ENCODE measurements at regions of chr4 and their contacts with region 1.

Region 1: GRCh38 chr4:77600521-77601451 is 4.8 kb upstream of the CXCL13 start:
- DNase-seq: no peak
- H3K4me3 Mint-ChIP-seq: no peak overlapping the region
- H3K27ac Mint-ChIP-seq: no peak overlapping the region
- H3K4me1 Mint-ChIP-seq: peaks cover 40% of the 10 kb centered on the region
- H3K27me3 Mint-ChIP-seq: peaks cover 10% of the 10 kb centered on the region

Region 2: DNA sequence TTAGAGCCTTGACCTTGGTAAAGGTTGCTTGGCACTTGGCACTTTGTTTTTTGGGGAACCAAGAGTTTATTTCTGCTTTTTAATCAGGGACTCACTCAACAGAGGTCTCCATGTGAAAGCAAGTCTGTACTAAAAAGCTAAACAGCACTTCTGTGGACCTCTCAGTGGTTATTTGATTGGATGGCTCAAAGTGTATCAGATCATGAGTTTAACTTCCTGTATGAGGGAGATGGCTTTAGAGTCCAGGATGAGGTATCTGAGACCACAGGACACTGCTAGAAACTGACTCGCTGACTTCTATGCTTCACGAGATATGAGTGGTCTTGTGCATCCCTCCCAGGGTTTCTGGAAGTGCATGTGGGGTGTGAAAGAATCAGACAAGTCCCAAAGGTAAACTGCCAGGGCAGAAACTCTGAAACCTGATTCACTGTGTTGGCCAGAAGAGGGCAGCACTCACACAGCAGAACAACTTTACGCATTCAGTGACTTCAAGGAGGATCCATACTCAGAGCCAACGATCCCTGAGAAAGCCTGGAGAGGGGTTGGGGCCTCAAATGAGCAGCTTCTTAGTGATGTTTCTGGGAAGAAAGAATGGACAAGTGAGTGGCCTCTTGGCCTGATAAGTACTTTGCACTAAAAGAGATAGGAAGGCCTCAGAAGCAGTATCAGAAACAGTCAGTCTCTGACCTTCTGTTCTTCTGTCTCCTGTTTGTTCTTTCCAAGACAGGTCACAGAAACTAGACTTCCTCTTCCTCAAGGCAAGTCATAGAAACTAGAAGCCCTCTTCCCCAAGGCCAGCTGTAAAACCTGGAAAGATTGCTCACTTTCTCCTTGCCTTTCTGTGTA is 215.4 kb before region 1 on chr4:
- intact Hi-C with region 1: loop called (anchors 1 kb)
- DNase-seq: peak; percentile 29
- H3K4me3 Mint-ChIP-seq: no peak overlapping the region
- H3K27ac Mint-ChIP-seq: no peak overlapping the region
- H3K4me1 Mint-ChIP-seq: peaks cover 11% of the 10 kb centered on the region
- H3K27me3 Mint-ChIP-seq: peaks cover 9% of the 10 kb centered on the region

Region 3: GRCh38 chr4:77465271-77465670 is 135.5 kb before region 1 on chr4:
- intact Hi-C with region 1: loop called (anchors 2 kb)
- DNase-seq: no peak
- H3K4me3 Mint-ChIP-seq: no peak overlapping the region
- H3K27ac Mint-ChIP-seq: no peak overlapping the region
- H3K4me1 Mint-ChIP-seq: peaks cover 8% of the 10 kb centered on the region
- H3K27me3 Mint-ChIP-seq: peaks cover 16% of the 10 kb centered on the region

Region 4: GRCh38 chr4:77538560-77539157 is 62.1 kb before region 1 on chr4:
- intact Hi-C with region 1: loop called (anchors 2 kb)
- DNase-seq: no peak
- H3K4me3 Mint-ChIP-seq: no peak overlapping the region
- H3K27ac Mint-ChIP-seq: no peak overlapping the region
- H3K4me1 Mint-ChIP-seq: peaks cover 28% of the 10 kb centered on the region
- H3K27me3 Mint-ChIP-seq: peaks cover 14% of the 10 kb centered on the region

Region 5: DNA sequence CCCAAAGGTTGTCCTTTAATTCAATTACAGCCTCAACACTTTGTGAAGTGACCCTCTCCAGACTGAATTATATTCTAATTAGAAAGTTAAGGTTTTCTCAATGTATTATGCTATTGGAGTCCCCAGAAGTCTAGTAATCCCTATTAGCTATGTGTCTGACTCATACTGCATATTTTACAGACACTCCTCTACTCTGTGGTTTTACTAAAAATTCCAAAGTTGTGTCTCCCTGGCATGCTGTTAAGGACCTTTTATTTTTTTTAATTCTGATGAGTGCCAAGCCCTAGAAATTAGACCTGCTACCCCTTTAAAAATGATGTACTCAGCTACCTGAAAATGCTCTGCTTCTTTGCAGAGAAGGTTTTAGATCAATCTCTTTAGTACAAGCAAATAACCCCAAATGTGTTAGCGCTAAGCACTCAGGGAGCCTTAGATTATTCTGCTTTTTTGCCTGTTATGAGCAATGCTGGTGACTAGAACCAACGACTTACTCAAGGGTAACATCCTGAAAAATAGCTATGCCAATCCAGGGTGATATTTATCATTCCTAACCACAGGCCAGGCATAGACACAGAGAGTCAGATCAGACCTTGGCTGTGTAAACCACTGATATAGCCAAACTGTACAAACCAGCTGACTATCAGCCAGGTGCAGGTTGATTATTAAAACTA is 21.2 kb before region 1 on chr4:
- intact Hi-C with region 1: loop called (anchors 1 kb)
- DNase-seq: no peak
- H3K4me3 Mint-ChIP-seq: no peak overlapping the region
- H3K27ac Mint-ChIP-seq: peak overlapping the region; percentile 47
- H3K4me1 Mint-ChIP-seq: peaks cover 42% of the 10 kb centered on the region
- H3K27me3 Mint-ChIP-seq: no peaks in the 10 kb centered on the region

Region 6: DNA sequence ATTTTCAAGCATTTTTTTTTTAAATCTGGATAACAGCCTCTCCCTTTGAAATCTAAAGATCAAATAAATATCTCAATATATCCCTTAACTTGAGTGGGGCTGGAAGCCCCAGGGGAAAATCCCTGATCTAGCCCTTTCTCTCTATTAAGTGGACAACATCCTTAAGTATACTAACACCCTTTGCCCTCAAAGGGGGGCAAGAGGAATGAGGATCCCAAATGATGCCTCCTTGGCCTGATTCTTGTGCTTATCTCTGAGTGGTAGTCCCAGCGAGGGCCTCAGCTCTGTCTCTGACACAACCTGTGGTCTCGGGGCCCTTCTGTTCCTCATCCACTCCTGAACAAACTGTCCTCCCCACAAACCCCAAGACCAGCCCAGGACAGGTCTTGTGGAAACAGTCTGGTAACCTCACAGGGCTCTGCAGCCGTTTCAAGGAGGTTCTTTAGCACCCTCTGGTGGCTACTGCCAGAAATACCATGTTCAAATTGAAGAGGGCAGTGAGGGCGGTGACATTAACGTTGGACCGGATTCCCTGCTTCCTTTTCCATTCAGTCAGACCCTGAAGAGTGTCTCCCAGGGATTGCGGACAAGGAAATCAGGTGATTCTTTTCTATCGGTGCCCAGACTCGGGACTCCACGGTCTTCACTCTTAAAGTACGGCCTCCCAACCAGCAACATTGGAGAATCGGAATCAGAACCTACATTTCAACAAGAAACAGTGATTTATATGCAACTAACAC is 17.8 kb after region 1 on chr4:
- intact Hi-C with region 1: loop called (anchors 1 kb)
- DNase-seq: peak; percentile 30
- H3K4me3 Mint-ChIP-seq: no peak overlapping the region
- H3K27ac Mint-ChIP-seq: no peak overlapping the region
- H3K4me1 Mint-ChIP-seq: peaks cover 26% of the 10 kb centered on the region
- H3K27me3 Mint-ChIP-seq: peaks cover 28% of the 10 kb centered on the region